HEK293 (cell line): ENCODE measurements at regions of chr9 and their contacts with region 1.

Region 1: DNA sequence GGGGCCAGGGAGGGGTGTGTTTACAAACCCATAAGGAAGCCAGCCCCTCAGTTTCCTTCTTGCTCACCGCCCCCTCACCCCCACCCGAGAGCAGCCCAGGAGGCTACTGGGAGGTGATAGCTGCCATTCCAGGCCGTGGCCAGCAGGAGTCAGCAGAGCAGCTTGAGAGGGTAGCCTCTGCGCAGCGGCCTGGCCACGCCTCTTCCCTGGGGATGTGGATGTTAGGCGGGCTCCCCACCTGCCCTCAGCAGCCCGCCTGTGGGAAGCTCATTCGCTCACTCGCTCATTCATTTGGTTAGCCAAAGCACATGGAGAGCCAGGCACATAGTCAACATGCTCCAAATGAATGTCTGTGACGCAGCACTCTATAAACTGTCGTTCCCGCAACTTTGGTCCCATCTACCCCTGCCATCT is 6.1 kb upstream of the DPM2 start:
- H3K4me3 ChIP-seq: no peak overlapping the region
- H3K27ac ChIP-seq: no peak overlapping the region
- H3K4me1 ChIP-seq: peaks cover 3% of the 10 kb centered on the region; the same call in 1 of the 2 replicates
- CTCF ChIP-seq: peak; percentile 70; the same call in 1 of the 2 replicates

Region 2: DNA sequence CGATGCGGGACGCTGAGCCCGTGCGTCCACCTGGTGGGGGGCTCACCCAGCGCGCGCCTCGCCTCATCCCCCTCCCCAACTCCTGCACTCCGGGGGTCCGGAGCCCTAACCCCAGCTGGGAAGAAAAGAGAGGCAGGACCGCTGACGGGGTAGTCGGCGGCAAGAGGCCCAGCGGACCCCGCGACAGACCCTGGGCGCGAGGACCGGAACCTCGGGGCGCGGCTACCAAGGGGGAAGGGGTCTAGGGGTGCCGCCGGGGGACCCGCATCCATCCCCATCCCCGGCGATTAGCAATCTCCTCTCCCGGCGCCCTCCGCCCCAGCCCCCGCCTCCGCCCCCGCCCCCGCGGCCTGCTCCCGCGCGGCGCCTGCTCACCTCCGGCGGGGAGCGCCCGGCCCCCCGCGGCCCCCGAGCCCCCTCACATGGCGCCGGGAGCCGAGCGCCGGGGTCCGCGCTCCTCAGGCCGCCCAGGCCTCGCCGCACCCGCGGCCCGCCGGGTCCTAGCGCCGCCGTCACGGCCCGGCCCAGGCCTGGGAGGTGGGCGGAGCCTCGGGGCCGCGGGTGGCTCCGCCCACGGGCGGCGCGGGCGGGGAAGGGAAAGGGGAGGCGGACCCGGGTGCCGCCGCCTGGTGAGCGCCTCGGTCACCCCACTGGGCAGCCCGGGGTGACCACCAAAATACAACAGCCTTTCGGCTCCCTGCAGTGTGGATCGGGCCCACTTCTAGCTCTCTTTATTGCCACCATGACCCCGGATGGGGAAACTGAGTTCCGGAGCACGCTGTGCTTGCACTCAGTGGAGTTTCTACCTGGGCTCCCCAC is 44.4 kb before region 1 on chr9 and contains the start of gene ST6GALNAC6:
- CTCF ChIA-PET with region 1: no interaction called
- POLR2A ChIA-PET with region 1: no interaction called
- H3K4me3 ChIP-seq: peak within 1 kb of the TSS; percentile 86
- H3K27ac ChIP-seq: peak within 1 kb of the TSS; percentile 78; the same call in 1 of the 2 replicates
- H3K4me1 ChIP-seq: no peaks in the 10 kb centered on the region
- CTCF ChIP-seq: no peak

Region 3: GRCh38 chr9:127930231-127931091 is 13.3 kb before region 1 on chr9 and contains the start of gene PIP5KL1:
- CTCF ChIA-PET with region 1: interaction called, 24 read pairs
- POLR2A ChIA-PET with region 1: interaction called, 6 read pairs
- H3K4me3 ChIP-seq: peak within 1 kb of the TSS; percentile 55
- H3K27ac ChIP-seq: peak within 1 kb of the TSS; percentile 50
- H3K4me1 ChIP-seq: 0 out of 2 replicates have a peak, but pooled peaks cover 5% of the 10 kb centered on the region
- CTCF ChIP-seq: no peak

Region 4: GRCh38 chr9:127966416-127967150 is 22.8 kb after region 1 on chr9:
- CTCF ChIA-PET with region 1: interaction called, 11 read pairs
- POLR2A ChIA-PET with region 1: no interaction called
- H3K4me3 ChIP-seq: no peak overlapping the region
- H3K27ac ChIP-seq: no peak overlapping the region
- H3K4me1 ChIP-seq: peaks cover 23% of the 10 kb centered on the region
- CTCF ChIP-seq: no peak

Region 5: DNA sequence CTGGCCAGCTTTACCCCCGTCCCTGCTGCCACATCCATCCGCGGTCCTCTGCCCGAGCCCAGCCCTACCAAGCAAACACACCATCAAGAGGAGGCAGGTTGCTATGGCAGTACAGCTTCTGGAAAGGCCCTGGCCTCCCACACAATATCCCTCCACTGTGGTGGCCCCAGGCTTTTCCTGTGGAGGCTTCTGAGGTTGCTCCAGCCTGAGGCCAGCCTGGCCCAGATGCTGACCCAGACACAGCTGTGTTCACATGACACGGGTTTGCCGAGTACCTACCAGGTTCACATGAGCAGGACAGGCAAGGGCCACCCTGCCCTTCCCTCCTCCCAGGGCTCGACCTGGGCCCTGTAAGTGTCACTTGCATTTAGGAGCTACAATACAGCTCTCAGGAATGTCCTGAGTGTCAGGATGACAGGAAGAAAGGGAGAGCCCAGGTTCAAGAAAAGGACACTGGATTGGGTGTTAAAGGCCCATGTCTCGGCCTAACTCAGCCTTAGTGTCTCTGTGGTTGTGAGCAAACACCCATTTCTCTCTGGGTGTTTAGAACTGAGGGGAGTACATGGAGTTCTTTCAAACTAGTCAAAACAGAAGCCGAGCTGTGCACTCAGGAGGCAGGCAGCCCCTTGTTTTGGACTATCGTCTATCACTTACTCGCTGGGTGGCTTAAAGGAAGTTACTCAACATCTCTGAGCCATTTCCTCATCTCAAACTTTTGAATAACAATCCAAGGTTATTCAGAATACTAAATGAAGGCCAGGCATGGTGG is 83.2 kb after region 1 on chr9:
- CTCF ChIA-PET with region 1: interaction called, 165 read pairs
- POLR2A ChIA-PET with region 1: no interaction called
- H3K4me3 ChIP-seq: no peak overlapping the region
- H3K27ac ChIP-seq: no peak overlapping the region
- H3K4me1 ChIP-seq: no peaks in the 10 kb centered on the region
- CTCF ChIP-seq: no peak

Region 6: GRCh38 chr9:128067876-128068613 is 124.3 kb after region 1 on chr9 and contains the start of gene SLC25A25:
- CTCF ChIA-PET with region 1: interaction called, 11 read pairs
- POLR2A ChIA-PET with region 1: interaction called, 3 read pairs
- H3K4me3 ChIP-seq: peak within 1 kb of the TSS; percentile 80
- H3K27ac ChIP-seq: peak within 1 kb of the TSS; percentile 77
- H3K4me1 ChIP-seq: peaks cover 2% of the 10 kb centered on the region; the same call in 1 of the 2 replicates
- CTCF ChIP-seq: peak; percentile 28; the same call in 1 of the 2 replicates

Region 7: DNA sequence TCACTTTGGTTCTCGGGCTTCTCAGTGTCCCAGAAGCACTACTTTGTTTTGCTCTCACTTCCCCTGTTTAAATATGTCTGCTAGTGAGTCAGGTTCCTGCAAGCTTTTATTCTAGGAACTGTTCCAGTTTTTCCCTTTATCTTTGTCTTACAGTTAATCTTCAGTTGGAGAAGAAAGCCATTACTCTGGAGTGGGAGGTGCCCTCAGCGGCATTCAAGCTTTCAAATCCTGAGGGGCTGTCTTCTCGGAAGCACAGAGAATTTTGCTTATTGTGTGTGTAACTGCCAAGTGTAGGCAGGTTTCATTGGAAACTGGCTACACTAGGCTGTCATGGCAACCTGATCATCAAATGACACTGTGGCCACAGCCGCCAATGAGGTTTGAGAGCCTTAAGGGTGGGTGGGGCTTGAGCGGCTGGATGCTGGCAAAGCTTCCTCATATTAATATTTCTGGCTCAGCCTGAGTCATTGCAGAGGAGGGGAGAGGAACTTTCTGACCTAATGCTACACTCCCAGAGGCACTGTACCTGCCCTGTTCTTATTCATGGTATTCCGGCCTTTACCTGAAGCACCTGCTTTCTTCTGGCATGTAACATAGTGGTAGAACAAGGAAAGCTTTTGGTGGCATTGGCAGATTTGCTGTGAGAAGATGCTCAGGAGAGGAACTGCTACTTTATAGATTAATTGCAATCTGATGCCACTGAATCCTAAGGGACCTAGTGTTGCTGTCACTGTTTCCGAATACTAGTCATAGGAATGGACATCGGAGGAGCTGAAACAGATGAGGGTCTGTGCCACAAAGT is 150.6 kb after region 1 on chr9:
- CTCF ChIA-PET with region 1: interaction called, 18 read pairs
- POLR2A ChIA-PET with region 1: no interaction called
- H3K4me3 ChIP-seq: no peak overlapping the region
- H3K27ac ChIP-seq: no peak overlapping the region
- H3K4me1 ChIP-seq: 0 out of 2 replicates have a peak, but pooled peaks cover 4% of the 10 kb centered on the region
- CTCF ChIP-seq: no peak